PC-9 (cell line): ENCODE measurements at regions of chr14 and their contacts with region 1.

Region 1: GRCh38 chr14:54691525-54692283 is 124.8 kb downstream of the SAMD4A start:
- DNase-seq: peak; percentile 49 to 73
- H3K4me3 ChIP-seq: no peak overlapping the region
- H3K27ac ChIP-seq: no peak overlapping the region
- H3K4me1 ChIP-seq: peaks cover 4% of the 10 kb centered on the region
- H3K27me3 ChIP-seq: no peaks in the 10 kb centered on the region
- CTCF ChIP-seq: peak; percentile 87

Region 2: GRCh38 chr14:54572316-54572715 is 119.4 kb before region 1 on chr14:
- CTCF ChIA-PET with region 1: interaction called, 21 read pairs
- POLR2A ChIA-PET with region 1: no interaction called
- intact Hi-C with region 1: no loop called
- DNase-seq: no peak
- H3K4me3 ChIP-seq: no peak overlapping the region
- H3K27ac ChIP-seq: no peak overlapping the region
- H3K4me1 ChIP-seq: peaks cover 33% of the 10 kb centered on the region
- H3K27me3 ChIP-seq: no peaks in the 10 kb centered on the region
- CTCF ChIP-seq: peak; percentile 66

Region 3: DNA sequence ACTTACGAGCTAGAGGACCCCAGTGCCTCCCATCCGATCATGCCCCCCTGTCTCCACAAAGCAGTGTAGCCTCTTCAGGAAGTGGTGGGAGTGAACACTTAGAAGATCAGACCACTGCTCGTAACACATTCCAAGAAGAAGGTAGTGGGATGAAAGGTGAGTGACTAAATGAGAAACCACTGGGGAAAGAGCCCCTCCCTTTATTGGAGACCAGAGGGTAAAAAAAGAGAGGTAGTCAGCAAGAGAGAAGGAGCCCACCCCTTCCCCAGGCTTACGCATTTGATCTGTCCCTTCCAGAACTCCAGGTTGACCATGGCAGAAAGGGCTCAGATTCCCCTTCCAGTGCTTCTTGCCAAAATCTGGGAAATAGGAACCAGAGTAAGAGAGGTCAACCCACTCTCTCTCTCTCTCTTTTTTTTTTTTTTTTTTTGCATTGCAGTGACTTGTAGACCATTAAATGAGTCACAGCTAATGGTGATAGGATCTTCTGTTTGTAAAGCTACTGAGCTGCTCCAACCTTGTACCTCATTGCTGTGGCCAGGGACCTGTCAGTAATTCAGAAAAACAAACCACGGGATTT is 45.5 kb after region 1 on chr14:
- CTCF ChIA-PET with region 1: no interaction called
- POLR2A ChIA-PET with region 1: no interaction called
- intact Hi-C with region 1: loop called (anchors 5 kb)
- DNase-seq: peak; percentile 38 to 84
- H3K4me3 ChIP-seq: no peak overlapping the region
- H3K27ac ChIP-seq: peak overlapping the region; percentile 13; the same call in 1 of the 2 replicates
- H3K4me1 ChIP-seq: peaks cover 16% of the 10 kb centered on the region
- H3K27me3 ChIP-seq: no peaks in the 10 kb centered on the region
- CTCF ChIP-seq: no peak

Region 4: DNA sequence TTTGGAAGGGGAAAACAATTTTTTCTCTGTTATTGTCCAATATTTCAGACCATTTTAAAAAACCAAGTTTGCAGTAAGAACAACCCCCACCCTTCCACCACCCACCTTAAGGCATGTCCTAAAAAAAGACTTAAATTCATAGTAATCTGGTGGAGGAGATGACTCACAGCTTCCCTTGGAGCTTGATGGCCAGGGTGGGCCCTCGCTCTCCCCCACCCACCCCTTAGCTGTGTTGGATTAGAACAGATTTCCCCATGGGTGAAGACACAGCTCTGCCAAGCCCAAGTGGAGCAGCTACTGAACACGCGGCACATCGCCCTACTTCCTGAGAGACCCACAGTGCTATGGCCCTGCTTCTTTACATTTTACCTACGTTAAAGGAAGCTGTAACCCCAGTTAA is 70.6 kb after region 1 on chr14:
- CTCF ChIA-PET with region 1: no interaction called
- POLR2A ChIA-PET with region 1: no interaction called
- intact Hi-C with region 1: no loop called
- DNase-seq: no peak
- H3K4me3 ChIP-seq: no peak overlapping the region
- H3K27ac ChIP-seq: no peak overlapping the region
- H3K4me1 ChIP-seq: no peaks in the 10 kb centered on the region
- H3K27me3 ChIP-seq: no peaks in the 10 kb centered on the region
- CTCF ChIP-seq: no peak